Sigmoid colon (tissue), 7 donors: ENCODE measurements at regions of chr16 and their contacts with region 1.

Region 1: DNA sequence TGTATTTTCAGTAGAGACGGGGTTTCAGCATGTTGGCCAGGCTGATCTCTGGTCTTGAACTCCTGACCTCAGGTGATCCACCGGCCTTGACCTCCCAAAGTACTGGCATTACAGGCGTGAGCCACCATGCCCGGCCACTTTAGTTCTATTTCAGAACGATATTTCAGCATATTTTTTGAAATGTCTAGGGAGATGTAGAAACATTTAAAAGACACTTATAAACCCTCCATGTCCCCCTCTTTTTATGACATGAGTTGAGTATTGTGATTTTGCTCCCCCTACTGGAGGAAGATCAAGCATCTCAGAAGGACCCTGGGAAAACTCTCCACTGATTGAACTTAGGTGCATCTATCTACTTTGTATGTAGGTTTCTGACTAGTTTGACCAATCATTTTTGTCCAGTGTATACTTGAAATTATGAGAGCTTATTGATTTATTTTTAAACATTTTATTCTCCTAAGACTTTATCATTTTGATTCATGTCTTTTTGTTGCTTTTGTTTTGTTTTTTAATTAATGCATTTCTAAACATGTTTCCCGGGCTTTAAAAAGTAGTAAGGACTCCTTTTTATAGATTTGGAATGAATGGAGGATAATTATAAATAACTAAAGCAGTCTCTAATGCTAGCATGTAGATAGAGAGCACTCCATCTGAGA is 105.1 kb downstream of the CHD9 start:
- DNase-seq: no peak
- H3K4me3 ChIP-seq: no peak overlapping the region
- H3K27ac ChIP-seq: no peak overlapping the region
- H3K4me1 ChIP-seq: no peaks in the 10 kb centered on the region
- H3K27me3 ChIP-seq: no peaks in the 10 kb centered on the region
- CTCF ChIP-seq: peak; percentile 26 to 66 (median 58)
- EP300 ChIP-seq: no peak
- POLR2A ChIP-seq: no peak

Region 2: DNA sequence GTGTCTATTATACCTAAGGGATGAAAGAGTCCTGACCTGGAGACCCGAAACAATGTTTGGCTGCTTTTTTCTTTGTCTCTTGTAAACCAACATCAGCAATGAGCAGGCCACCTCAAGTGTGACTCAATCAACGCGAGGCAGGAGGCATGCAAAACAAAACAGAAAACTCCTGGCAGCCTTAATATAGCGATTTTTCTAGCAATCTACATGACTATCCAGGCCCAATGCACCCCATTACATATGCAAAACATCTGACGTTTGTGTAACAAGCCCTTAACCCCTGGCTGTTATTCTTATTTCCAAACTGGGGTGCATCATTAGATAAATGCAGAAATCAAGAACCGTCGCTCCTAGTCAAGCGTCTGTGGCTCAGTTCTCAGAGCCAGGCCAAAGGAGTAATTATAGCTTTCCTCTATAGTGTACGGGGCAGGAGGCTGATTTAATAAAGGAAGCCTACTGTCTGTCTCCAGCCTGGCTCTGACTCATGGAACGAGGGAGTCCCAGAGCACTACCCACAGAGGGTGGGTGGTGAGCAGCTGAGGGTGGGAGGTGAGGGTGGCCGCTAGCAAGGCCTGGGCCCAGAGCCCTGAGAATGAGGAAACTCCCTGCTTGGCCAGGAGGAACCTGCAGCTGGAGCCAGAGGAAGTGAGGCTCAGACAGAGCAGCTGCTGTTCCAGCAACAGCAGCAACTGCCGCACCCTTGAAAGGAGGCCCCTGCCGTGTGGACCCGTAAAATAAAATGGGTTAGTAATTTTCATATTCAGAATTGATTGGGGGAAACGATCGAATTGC is 61.2 kb before region 1 on chr16:
- intact Hi-C with region 1: no loop called
- DNase-seq: peak; percentile 95
- H3K4me3 ChIP-seq: peak overlapping the region; percentile 10 to 41 (median 36)
- H3K27ac ChIP-seq: peak overlapping the region; percentile 93 to 96 (median 94)
- H3K4me1 ChIP-seq: peaks cover 0 to 63% (median 55%) of the 10 kb centered on the region in 4 donors
- H3K27me3 ChIP-seq: no peaks in the 10 kb centered on the region
- CTCF ChIP-seq: no peak
- EP300 ChIP-seq: no peak
- POLR2A ChIP-seq: no peak

Region 3: DNA sequence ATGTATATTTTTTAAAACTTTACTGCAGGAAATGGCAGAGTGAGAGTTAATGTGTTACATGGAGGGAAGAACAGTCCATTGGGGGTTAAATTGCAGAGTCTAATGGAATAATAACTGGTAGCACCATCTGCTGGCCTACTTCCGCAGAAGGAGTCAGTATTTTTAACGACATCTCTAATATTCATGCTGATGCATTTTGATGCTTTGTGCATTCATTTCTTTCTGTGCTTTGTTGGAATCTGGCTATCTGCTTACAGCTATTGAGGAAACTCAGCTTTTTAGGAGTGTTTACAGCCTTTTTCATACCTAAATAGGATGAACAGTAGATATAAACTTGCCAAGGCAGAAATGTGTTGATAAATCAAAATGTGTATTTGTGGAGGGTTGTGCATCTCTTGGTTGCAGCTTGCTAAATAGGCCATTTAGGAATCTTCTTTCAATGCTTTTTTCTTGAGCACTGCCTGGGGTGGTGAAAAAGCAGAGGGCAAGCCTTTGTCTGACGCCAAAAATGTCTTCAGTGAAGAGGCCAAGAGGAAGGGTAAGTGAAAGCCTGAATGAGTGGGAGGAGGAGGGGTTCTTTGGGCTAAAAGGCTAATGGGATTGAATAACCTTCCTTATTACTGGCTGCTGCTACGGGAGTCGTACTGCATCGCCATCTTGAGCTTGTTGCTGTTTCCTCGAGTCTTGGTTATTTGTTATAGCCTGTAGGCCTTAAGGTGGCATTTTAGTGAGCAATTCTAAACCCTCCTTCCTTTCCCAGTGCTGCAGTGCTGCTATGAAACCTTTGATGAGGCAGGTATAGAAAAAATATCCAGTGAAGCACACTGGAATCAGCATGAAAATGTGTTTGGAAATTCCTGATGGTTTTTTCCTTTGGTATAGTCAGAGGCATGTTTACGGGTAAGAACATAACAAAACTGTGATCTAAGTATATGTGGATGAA is 48.2 kb after region 1 on chr16:
- intact Hi-C with region 1: loop called (anchors 5 kb)
- DNase-seq: no peak
- H3K4me3 ChIP-seq: peak overlapping the region; percentile 9 to 43 (median 40)
- H3K27ac ChIP-seq: peak overlapping the region; percentile 79 to 82 (median 81)
- H3K4me1 ChIP-seq: peaks cover 0 to 63% (median 31%) of the 10 kb centered on the region in 4 donors
- H3K27me3 ChIP-seq: no peaks in the 10 kb centered on the region
- CTCF ChIP-seq: peak; percentile 38 to 55 (median 52)
- EP300 ChIP-seq: no peak
- POLR2A ChIP-seq: no peak